ENCODE measurements at regions of chr17 and their contacts with region 1.

Region 1: GRCh38 chr17:74818291-74818938 is 41.3 kb downstream of the GRIN2C start:
- DNase-seq: no peak
- ATAC-seq: no peak
- H3K4me3 ChIP-seq: no peak overlapping the region
- H3K27ac ChIP-seq: no peak overlapping the region
- H3K4me1 ChIP-seq: no peaks in the 10 kb centered on the region
- H3K27me3 ChIP-seq: no peaks in the 10 kb centered on the region
- CTCF ChIP-seq: no peak

Region 2: DNA sequence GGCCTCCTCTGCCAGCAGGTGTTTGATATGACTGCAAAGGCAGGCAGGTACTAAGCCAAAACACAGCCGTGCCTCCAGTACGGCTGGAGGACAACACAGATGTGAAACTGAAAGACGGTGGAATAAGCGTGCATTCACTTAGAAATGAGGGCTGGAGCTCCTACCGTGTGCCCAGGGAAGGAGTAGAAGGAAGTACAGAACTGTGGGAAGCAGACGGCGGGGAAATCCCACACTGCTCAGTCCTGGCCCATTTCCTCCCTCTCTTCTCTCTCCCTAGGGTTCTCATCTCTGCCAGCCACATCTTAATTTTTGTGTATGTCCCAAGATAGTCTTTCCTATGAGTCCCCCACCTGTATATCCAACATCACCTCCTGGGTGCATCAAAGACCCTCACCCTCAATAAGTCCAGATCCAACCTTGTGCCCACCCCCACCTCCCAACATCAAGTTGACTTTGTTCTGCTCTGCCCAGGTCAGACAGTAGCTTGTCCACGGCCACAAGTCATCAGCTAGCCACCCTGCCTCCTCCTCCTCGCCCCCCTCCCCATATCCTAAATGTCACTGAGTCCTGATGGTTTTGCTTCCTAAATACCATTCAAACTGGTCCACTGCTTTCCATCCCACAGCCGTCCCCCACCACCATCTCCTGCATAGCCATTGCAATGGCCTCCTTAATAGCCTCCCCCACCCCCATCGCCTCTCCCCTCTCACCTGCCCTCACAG is 692.1 kb before region 1 on chr17:
- CTCF ChIA-PET with region 1: no interaction called
- POLR2A ChIA-PET with region 1: interaction called, 10 read pairs
- in situ Hi-C with region 1: no loop called
- intact Hi-C with region 1: no loop called
- DNase-seq: no peak
- ATAC-seq: peak; percentile 61; the same call in 1 of the 2 replicates
- H3K4me3 ChIP-seq: no peak overlapping the region
- H3K27ac ChIP-seq: no peak overlapping the region
- H3K4me1 ChIP-seq: no peaks in the 10 kb centered on the region
- H3K27me3 ChIP-seq: peaks cover 7% of the 10 kb centered on the region
- CTCF ChIP-seq: no peak

Region 3: GRCh38 chr17:74831444-74832146 is 13.2 kb after region 1 on chr17:
- CTCF ChIA-PET with region 1: no interaction called
- POLR2A ChIA-PET with region 1: no interaction called
- in situ Hi-C with region 1: no loop called
- intact Hi-C with region 1: no loop called
- DNase-seq: no peak
- ATAC-seq: no peak
- H3K4me3 ChIP-seq: no peak overlapping the region
- H3K27ac ChIP-seq: no peak overlapping the region
- H3K4me1 ChIP-seq: 0 out of 2 replicates have a peak, but pooled peaks cover 3% of the 10 kb centered on the region
- H3K27me3 ChIP-seq: no peaks in the 10 kb centered on the region
- CTCF ChIP-seq: no peak

Measured in Panc1 (cell line).